ENCODE measurements at regions of chr3 and their contacts with region 1.

Region 1: DNA sequence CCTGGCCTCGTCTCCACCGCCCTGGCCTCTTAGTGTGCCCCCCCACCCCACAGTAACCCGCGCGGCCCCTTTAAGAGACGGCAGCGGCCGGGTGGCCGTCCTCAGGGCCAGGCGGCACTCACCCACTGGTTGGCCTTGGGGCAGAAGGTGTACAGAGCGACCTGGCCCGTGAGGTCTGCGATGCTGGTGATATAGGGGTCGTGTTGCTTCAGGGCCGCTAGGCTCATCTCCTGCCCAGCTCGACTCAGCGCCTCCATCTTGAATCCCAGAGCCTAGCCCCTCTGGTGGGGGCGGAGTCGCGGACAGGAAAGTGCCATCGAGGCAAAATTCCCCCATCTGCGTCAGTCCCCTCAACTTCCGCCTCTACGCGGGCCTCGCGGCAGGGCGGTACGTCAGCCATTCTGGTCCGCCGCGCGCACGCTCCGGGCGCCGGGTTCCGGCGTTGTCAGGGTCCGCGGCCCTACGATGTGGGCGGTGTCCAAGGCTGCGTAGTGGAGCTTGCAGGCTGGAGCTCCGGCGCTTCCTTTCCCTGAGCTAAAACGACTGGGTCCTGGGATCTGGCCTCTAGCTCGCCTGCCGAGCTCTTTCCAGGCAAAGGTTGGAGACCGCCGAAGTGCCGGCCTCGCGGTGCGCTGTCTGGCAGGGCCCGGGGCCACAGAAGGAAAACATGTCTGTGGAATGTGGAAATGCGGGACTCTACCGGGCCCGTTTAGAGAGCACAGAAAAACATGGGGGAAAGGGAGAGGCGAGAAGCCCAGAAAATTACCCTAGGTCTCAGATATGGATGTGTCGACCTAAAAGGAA is at the start of gene DCP1A:
- DNase-seq: peak; percentile 97
- ATAC-seq: peak; percentile 98
- H3K4me3 Mint-ChIP-seq: peak within 1 kb of the TSS; percentile 93
- H3K27ac Mint-ChIP-seq: peak within 1 kb of the TSS; percentile 99
- H3K4me1 Mint-ChIP-seq: peaks cover 21% of the 10 kb centered on the region
- H3K27me3 Mint-ChIP-seq: no peaks in the 10 kb centered on the region
- total RNA-seq, gene DCP1A: 33.4 to 41.9 TPM

Region 2: DNA sequence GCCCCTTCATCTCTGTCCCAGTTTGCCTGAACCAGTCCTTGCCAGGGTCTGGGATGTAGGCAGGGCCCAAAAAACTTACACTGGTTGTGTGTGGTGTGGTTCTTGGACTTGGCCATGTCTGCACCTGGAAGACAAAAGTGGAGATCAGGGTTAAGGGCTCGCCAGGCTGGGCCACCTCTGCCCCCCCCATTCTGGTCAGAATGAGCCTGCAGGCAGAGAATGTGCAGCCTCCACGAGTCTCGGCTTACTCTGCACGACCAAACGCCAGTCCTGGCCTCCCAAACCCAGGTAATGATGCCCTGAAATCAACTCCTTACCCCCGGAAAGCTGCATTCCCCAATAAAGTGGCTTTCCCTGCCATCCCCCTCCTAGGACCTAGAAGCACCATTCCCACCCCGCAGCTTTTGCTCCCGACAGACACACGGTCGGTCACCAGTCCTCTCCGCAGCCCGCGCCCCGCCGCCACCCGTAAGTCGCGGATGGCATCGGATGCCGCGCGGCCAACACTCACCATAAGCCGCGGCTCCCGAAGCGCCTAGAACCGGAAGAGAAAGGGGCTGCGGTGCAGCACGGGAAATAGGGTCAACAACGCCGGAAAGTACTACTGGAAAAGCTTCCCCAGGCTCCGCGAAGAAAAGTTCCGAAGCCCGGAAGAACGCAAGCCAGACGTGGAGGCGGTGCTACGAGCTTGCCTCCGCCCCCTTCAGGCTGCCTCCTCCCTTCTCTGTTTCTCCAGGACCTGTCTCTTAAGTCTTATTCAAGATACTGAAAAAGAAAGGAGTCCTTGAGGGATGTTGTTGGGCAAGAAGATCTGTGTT is 1351.9 kb before region 1 on chr3 and contains the start of gene RPL29:
- CTCF ChIA-PET with region 1: no interaction called
- POLR2A ChIA-PET with region 1: no interaction called
- intact Hi-C with region 1: loop called in 1 of 2 experiments (anchors 10 kb)
- DNase-seq: peak; percentile 96
- ATAC-seq: peak; percentile 95
- H3K4me3 Mint-ChIP-seq: peak within 1 kb of the TSS; percentile 100
- H3K27ac Mint-ChIP-seq: peak within 1 kb of the TSS; percentile 100
- H3K4me1 Mint-ChIP-seq: peaks cover 26% of the 10 kb centered on the region
- H3K27me3 Mint-ChIP-seq: no peaks in the 10 kb centered on the region
- total RNA-seq, gene RPL29: 1,975 to 2,071 TPM

Region 3: GRCh38 chr3:52685709-52686691 is 661.5 kb before region 1 on chr3 and contains the starts of genes GNL3 and PBRM1:
- CTCF ChIA-PET with region 1: no interaction called
- POLR2A ChIA-PET with region 1: no interaction called
- intact Hi-C with region 1: loop called in 1 of 2 experiments (anchors 2 kb)
- DNase-seq: peak; percentile 97
- ATAC-seq: peak; percentile 70
- H3K4me3 Mint-ChIP-seq: peak within 1 kb of the TSS; percentile 99
- H3K27ac Mint-ChIP-seq: peak within 1 kb of the TSS; percentile 99
- H3K4me1 Mint-ChIP-seq: peaks cover 75% of the 10 kb centered on the region
- H3K27me3 Mint-ChIP-seq: no peaks in the 10 kb centered on the region
- total RNA-seq, gene GNL3: 206 to 218 TPM
- total RNA-seq, gene PBRM1: 57.6 to 59.8 TPM

Region 4: GRCh38 chr3:53083521-53083920 is 263.9 kb before region 1 on chr3:
- CTCF ChIA-PET with region 1: no interaction called
- POLR2A ChIA-PET with region 1: no interaction called
- intact Hi-C with region 1: no loop called
- DNase-seq: no peak
- ATAC-seq: no peak
- H3K4me3 Mint-ChIP-seq: no peak overlapping the region
- H3K27ac Mint-ChIP-seq: no peak overlapping the region
- H3K4me1 Mint-ChIP-seq: peaks cover 5% of the 10 kb centered on the region
- H3K27me3 Mint-ChIP-seq: no peaks in the 10 kb centered on the region

Region 5: GRCh38 chr3:53130179-53131061 is 217.0 kb before region 1 on chr3 and contains the start of gene RFT1:
- CTCF ChIA-PET with region 1: interaction called, 5 read pairs
- POLR2A ChIA-PET with region 1: interaction called, 3 read pairs
- intact Hi-C with region 1: loop called in 1 of 2 experiments (anchors 1 kb)
- DNase-seq: peak; percentile 99
- ATAC-seq: peak; percentile 93
- H3K4me3 Mint-ChIP-seq: peak within 1 kb of the TSS; percentile 98
- H3K27ac Mint-ChIP-seq: peak within 1 kb of the TSS; percentile 95
- H3K4me1 Mint-ChIP-seq: peaks cover 22% of the 10 kb centered on the region
- H3K27me3 Mint-ChIP-seq: no peaks in the 10 kb centered on the region
- total RNA-seq, gene RFT1: 39.8 to 49.0 TPM

Region 6: GRCh38 chr3:53219895-53220483 is 127.5 kb before region 1 on chr3:
- CTCF ChIA-PET with region 1: no interaction called
- POLR2A ChIA-PET with region 1: no interaction called
- intact Hi-C with region 1: loop called in 1 of 2 experiments (anchors 1 kb)
- DNase-seq: peak; percentile 93
- ATAC-seq: peak; percentile 99
- H3K4me3 Mint-ChIP-seq: no peak overlapping the region
- H3K27ac Mint-ChIP-seq: no peak overlapping the region
- H3K4me1 Mint-ChIP-seq: peaks cover 2% of the 10 kb centered on the region
- H3K27me3 Mint-ChIP-seq: no peaks in the 10 kb centered on the region

Region 7: GRCh38 chr3:53303957-53304356 is 43.5 kb before region 1 on chr3:
- CTCF ChIA-PET with region 1: no interaction called
- POLR2A ChIA-PET with region 1: no interaction called
- intact Hi-C with region 1: loop called (anchors 1 to 2 kb)
- DNase-seq: no peak
- ATAC-seq: no peak
- H3K4me3 Mint-ChIP-seq: no peak overlapping the region
- H3K27ac Mint-ChIP-seq: no peak overlapping the region
- H3K4me1 Mint-ChIP-seq: no peaks in the 10 kb centered on the region
- H3K27me3 Mint-ChIP-seq: no peaks in the 10 kb centered on the region

Region 8: GRCh38 chr3:53891497-53892285 is 544.2 kb after region 1 on chr3 and contains the start of gene SELENOK:
- CTCF ChIA-PET with region 1: interaction called, 3 read pairs
- POLR2A ChIA-PET with region 1: interaction called, 7 read pairs
- intact Hi-C with region 1: loop called (anchors 1 kb)
- DNase-seq: peak; percentile 98
- ATAC-seq: peak; percentile 95
- H3K4me3 Mint-ChIP-seq: peak within 1 kb of the TSS; percentile 85
- H3K27ac Mint-ChIP-seq: peak within 1 kb of the TSS; percentile 95
- H3K4me1 Mint-ChIP-seq: peaks cover 48% of the 10 kb centered on the region
- H3K27me3 Mint-ChIP-seq: peaks cover 6% of the 10 kb centered on the region
- total RNA-seq, gene SELENOK: 31.6 to 45.1 TPM